H1 (cell line): ENCODE measurements at regions of chr1 and their contacts with region 1.

Region 1: GRCh38 chr1:108828022-108828961 is 28.6 kb downstream of the AKNAD1 start:
- DNase-seq: peak; percentile 60 to 87
- H3K4me3 ChIP-seq: no peak overlapping the region
- H3K27ac ChIP-seq: no peak overlapping the region
- H3K4me1 ChIP-seq: peaks cover 0 to 3% (median 2%) of the 10 kb centered on the region in 4 experiments; a peak in 3 of 7 replicates
- H3K27me3 ChIP-seq: no peaks in the 10 kb centered on the region
- CTCF ChIP-seq: peak; percentile 74 to 88 (median 76)
- EP300 ChIP-seq: no peak
- POLR2A ChIP-seq: no peak
- RAD21 ChIP-seq: peak; percentile 75 to 82

Region 2: DNA sequence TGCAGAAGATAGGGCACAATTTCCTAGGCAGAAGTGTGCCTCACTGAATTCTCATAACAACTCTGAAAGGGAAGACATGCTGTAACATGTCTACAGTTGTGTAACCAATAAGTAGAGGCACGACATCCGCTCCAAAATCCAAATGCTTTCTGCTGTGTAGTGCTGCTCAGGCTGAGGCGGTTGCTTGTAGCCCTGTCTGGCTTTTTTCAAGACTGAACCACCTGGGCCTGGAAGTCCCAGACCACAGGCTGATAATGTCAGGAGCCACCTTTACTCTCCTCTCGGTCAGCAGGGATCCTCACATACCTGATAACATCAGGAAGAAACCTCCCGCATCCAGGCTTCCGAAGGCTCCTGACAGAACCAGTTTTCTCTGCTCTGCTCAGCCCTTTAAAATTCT is 17.7 kb after region 1 on chr1:
- CTCF ChIA-PET with region 1: interaction called, 41 read pairs
- POLR2A ChIA-PET with region 1: interaction called, 3 read pairs
- DNase-seq: no peak
- H3K4me3 ChIP-seq: no peak overlapping the region
- H3K27ac ChIP-seq: no peak overlapping the region
- H3K4me1 ChIP-seq: peaks cover 0 to 3% (median under 1%) of the 10 kb centered on the region in 4 experiments; a peak in 3 of 7 replicates
- H3K27me3 ChIP-seq: no peaks in the 10 kb centered on the region
- CTCF ChIP-seq: no peak
- EP300 ChIP-seq: no peak
- POLR2A ChIP-seq: no peak
- RAD21 ChIP-seq: no peak

Region 3: DNA sequence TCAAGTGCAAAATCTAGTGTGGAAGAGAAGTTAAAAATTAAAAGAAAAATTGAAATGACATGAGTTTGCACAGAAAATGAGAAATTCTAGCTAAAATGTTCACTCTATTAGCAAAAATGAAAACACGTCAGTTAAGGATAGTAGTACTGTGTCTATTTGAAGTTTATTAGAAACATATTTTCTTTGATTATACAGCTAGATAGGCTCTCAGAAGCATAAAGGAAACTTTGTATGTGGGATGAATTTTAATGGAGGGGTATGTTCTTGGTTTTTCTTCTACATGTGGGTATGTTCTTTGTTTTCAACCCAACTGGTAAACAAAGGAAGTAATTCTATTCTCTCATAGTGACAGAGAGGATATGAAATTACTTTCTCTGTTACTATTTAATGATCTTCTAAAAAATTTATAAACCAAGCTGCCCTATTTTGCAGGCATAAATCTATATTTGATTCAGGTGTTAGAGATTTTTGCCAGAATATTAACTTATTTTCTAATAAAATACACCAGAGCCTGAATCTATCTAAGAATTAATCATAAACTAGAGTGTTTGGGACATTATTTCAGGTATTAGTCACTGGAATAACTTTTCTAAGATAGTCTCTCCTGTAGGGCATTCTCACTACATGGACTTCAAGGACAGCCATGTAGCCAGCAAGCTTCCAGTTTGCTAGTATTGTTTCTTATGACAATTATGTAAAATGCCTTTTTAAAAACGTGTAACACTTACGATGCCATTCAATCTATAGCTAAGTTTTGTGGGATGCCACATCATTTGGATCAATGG is 64.3 kb after region 1 on chr1:
- CTCF ChIA-PET with region 1: interaction called, 160 read pairs
- POLR2A ChIA-PET with region 1: interaction called, 5 read pairs
- DNase-seq: no peak
- H3K4me3 ChIP-seq: no peak overlapping the region
- H3K27ac ChIP-seq: no peak overlapping the region
- H3K4me1 ChIP-seq: no peaks in the 10 kb centered on the region
- H3K27me3 ChIP-seq: no peaks in the 10 kb centered on the region
- CTCF ChIP-seq: no peak
- EP300 ChIP-seq: no peak
- POLR2A ChIP-seq: no peak
- RAD21 ChIP-seq: no peak